HEK293 (cell line): ENCODE measurements at regions of chr9 and their contacts with region 1.

Region 1: GRCh38 chr9:92706216-92706940 is 36.4 kb upstream of the IPPK start:
- H3K4me3 ChIP-seq: no peak overlapping the region
- H3K27ac ChIP-seq: no peak overlapping the region
- H3K4me1 ChIP-seq: no peaks in the 10 kb centered on the region
- CTCF ChIP-seq: no peak

Region 2: GRCh38 chr9:92716557-92716956 is 10.2 kb after region 1 on chr9:
- CTCF ChIA-PET with region 1: interaction called, 10 read pairs
- POLR2A ChIA-PET with region 1: no interaction called
- H3K4me3 ChIP-seq: no peak overlapping the region
- H3K27ac ChIP-seq: no peak overlapping the region
- H3K4me1 ChIP-seq: no peaks in the 10 kb centered on the region
- CTCF ChIP-seq: no peak; the same call in 1 of the 2 replicates